ENCODE measurements at regions of chr7 and their contacts with region 1.

Region 1: GRCh38 chr7:12436896-12437535 is 33.4 kb upstream of the VWDE start:
- DNase-seq: no peak
- ATAC-seq: no peak
- H3K4me3 Mint-ChIP-seq: no peak overlapping the region
- H3K27ac Mint-ChIP-seq: no peak overlapping the region
- H3K4me1 Mint-ChIP-seq: no peaks in the 10 kb centered on the region
- H3K27me3 Mint-ChIP-seq: peaks cover 4% of the 10 kb centered on the region
- CTCF ChIP-seq: no peak

Region 2: DNA sequence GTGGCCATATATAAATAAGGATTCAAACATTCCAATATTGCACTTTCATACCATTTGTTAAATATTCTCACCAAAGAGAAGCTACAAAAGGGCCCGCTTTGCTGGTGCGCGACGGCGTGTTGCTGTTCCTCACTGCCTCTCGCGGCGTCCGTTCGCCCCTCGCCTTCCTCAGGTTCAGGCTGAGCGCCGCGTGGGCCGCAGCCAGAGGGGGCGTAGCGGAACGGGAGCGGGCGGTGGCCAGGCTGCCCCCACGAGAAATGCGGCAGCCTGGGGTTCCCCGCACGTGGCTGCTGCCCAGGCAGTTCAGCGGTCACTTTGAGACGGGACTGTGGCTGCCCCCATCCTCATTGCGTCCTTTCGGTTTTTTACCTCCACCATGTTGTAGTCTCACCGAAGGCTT is 33.9 kb after region 1 on chr7:
- CTCF ChIA-PET with region 1: no interaction called
- POLR2A ChIA-PET with region 1: no interaction called
- intact Hi-C with region 1: no loop called
- DNase-seq: no peak
- ATAC-seq: no peak
- H3K4me3 Mint-ChIP-seq: no peak overlapping the region
- H3K27ac Mint-ChIP-seq: no peak overlapping the region
- H3K4me1 Mint-ChIP-seq: no peaks in the 10 kb centered on the region
- H3K27me3 Mint-ChIP-seq: peaks cover 4% of the 10 kb centered on the region
- CTCF ChIP-seq: no peak

Region 3: GRCh38 chr7:12490117-12490688 is 53.2 kb after region 1 on chr7:
- CTCF ChIA-PET with region 1: interaction called, 22 read pairs
- POLR2A ChIA-PET with region 1: no interaction called
- intact Hi-C with region 1: loop called (anchors 10 kb)
- DNase-seq: no peak
- ATAC-seq: peak; percentile 64
- H3K4me3 Mint-ChIP-seq: no peak overlapping the region
- H3K27ac Mint-ChIP-seq: no peak overlapping the region
- H3K4me1 Mint-ChIP-seq: no peaks in the 10 kb centered on the region
- H3K27me3 Mint-ChIP-seq: peaks cover 5% of the 10 kb centered on the region
- CTCF ChIP-seq: peak; percentile 56

Measured in activated CD8-positive, alpha-beta T cell treated with anti-CD3 and anti-CD28 coated beads for 36 hours (primary cell).